ENCODE measurements at regions of chr11 and their contacts with region 1.

Region 1: GRCh38 chr11:35424157-35424940 is 5.0 kb upstream of the SLC1A2 start:
- DNase-seq: no peak
- ATAC-seq: no peak
- H3K4me3 ChIP-seq: no peak overlapping the region
- H3K27ac ChIP-seq: no peak overlapping the region
- H3K4me1 ChIP-seq: peaks cover 10% of the 10 kb centered on the region
- CTCF ChIP-seq: no peak
- EP300 ChIP-seq: no peak
- POLR2A ChIP-seq: no peak
- RAD21 ChIP-seq: no peak

Region 2: DNA sequence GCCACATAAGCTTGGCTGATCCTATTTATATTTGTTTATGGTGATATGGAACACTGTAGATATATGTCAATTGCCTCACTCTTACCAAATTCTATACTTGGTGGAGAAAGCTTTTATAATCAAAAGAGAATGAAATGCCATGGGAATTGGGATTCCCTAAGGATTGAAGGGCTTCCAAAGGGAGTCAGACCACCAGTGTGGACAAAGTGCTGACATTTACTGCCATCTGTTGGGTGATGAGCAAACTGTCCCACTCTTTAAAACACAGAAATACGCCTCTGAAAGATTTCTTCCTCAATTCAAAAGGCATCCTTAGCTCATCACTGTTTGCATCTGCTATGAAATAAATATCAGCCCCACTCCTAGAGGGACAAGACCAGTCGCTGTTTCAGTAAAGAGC is 12.1 kb before region 1 on chr11:
- CTCF ChIA-PET with region 1: interaction called, 14 read pairs
- POLR2A ChIA-PET with region 1: no interaction called
- DNase-seq: peak; percentile 25 to 43
- ATAC-seq: peak; percentile 65 to 82; a peak in 5 of 6 replicates
- H3K4me3 ChIP-seq: no peak overlapping the region
- H3K27ac ChIP-seq: no peak overlapping the region
- H3K4me1 ChIP-seq: no peaks in the 10 kb centered on the region
- CTCF ChIP-seq: peak; percentile 72
- EP300 ChIP-seq: no peak
- POLR2A ChIP-seq: no peak
- RAD21 ChIP-seq: peak; percentile 72 to 74